Dorsolateral prefrontal cortex (tissue), 120 donors: ENCODE measurements at regions of chr7 and their contacts with region 1.

Region 1: DNA sequence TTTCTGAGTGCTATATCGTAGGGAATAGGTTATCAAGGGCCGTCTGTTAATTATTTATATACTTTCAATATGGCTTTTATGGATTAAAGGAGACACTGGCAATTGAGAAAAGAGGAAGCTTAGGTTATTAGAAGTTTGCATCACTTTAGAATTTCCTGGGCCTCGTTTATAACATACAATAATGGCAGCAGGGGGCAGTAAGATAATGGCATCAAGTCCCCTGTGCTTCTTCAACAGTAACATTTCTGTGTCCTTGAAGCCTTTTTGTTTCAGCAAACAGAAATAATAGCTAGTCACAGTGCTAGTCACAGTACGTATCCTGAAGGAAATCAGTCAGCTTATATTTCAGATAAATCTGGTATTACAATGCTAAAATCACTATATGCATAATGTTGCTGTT is 41.9 kb downstream of the SPAM1 start:
- DNase-seq: no peak
- H3K4me3 ChIP-seq: peak overlapping the region in 3 of 59 donors; percentile 12 to 45 (median 45)
- H3K27ac ChIP-seq: peak overlapping the region in 28 of 59 donors; percentile 3 to 70 (median 37)
- H3K27me3 ChIP-seq: no peaks in the 10 kb centered on the region
- CTCF ChIP-seq: peak in 54 of 56 donors; percentile 26 to 81 (median 58)

Region 2: DNA sequence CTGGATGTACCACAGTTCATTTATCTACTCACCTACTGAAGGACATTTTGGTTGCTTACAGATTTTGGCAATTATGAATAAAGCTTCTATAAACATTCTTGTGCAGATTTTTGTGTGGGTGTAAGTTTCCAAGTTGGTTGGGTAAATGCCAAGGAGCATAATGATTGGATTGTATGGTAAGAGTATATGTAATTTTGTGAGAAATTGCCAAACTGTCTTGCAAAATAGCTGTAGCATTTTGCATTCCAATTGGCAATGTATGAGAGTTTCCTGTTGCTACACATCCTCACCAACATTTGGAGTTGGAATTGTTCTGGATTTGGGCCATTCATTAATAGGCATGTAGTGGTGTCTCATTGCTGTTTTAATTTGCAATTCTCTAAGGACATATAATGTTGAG is 155.9 kb before region 1 on chr7:
- intact Hi-C with region 1: no loop called
- DNase-seq: no peak
- H3K4me3 ChIP-seq: no peak overlapping the region
- H3K27ac ChIP-seq: no peak overlapping the region
- H3K27me3 ChIP-seq: no peaks in the 10 kb centered on the region
- CTCF ChIP-seq: no peak

Region 3: GRCh38 chr7:124032369-124033094 is 65.6 kb after region 1 on chr7 and contains the start of gene TMEM229A:
- intact Hi-C with region 1: loop called (anchors 2 to 5 kb)
- DNase-seq: peak; percentile 37 to 75 (median 60)
- H3K4me3 ChIP-seq: peak within 1 kb of the TSS; percentile 61 to 93 (median 84)
- H3K27ac ChIP-seq: peak within 1 kb of the TSS; percentile 92 to 100 (median 98)
- H3K27me3 ChIP-seq: no peaks in the 10 kb centered on the region
- CTCF ChIP-seq: peak in 28 of 56 donors; percentile 3 to 52 (median 23)
- total RNA-seq, gene TMEM229A: 4.5 to 16.4 (median 9.0) TPM

Region 4: DNA sequence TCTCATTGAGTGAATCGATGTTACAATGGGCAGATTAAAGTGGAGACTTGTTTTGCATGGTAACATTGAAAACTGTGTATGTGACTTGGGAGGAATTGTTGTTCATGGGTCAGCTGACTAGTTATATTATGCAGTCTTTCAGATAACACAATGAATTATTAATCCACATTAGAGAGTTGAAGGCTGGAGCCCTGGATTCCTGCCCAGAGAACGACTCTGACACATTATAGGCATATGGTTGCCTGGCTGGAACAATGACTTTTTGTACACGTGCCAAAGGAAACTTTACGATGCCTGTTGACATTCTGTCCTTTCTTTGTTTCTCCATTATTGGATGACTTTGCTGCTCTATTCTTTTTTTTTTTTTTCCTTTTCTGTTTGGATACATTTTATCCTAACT is 118.2 kb after region 1 on chr7:
- intact Hi-C with region 1: loop called in 1 of 2 experiments (anchors 5 kb)
- DNase-seq: peak; percentile 35 to 95 (median 71)
- H3K4me3 ChIP-seq: peak overlapping the region in 23 of 59 donors; percentile 0 to 39 (median 15)
- H3K27ac ChIP-seq: peak overlapping the region in 57 of 59 donors; percentile 3 to 92 (median 78)
- H3K27me3 ChIP-seq: no peaks in the 10 kb centered on the region
- CTCF ChIP-seq: peak in 3 of 56 donors; percentile 6 to 20 (median 9)

Region 5: DNA sequence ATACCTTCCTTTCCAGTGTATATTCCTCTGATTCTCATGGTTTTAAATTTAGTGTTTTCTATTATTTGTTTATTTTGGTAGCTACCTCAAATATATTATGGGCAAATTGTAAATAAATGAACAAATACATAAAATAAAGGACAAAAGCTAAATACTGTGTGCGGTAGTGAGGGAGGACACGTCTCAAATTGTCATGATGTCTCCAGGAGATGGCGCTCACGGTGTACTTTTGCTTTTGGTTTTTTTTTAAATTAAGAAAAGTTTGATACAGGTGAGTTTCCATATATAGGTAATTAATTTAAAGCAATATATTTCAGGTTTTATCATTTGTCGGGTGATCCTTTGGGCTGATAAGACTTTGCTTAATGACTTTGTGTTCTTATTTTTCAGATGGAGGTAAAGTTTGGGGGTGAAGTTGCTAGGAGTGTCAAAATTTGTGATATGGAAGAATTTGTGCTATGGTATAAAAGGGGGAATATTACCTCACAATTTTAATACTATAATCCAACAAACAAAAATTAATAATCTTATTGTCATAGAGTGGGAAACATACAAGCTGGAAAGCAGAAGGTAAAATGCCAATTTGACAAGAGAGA is 134.3 kb after region 1 on chr7:
- intact Hi-C with region 1: loop called (anchors 5 to 10 kb)
- DNase-seq: no peak
- H3K4me3 ChIP-seq: no peak overlapping the region
- H3K27ac ChIP-seq: no peak overlapping the region
- H3K27me3 ChIP-seq: no peaks in the 10 kb centered on the region
- CTCF ChIP-seq: peak in 55 of 56 donors; percentile 10 to 76 (median 62)

Region 6: GRCh38 chr7:124152859-124153692 is 186.1 kb after region 1 on chr7:
- intact Hi-C with region 1: loop called (anchors 2 to 5 kb)
- DNase-seq: peak in 2 of 10 donors; percentile 4 to 14
- H3K4me3 ChIP-seq: no peak overlapping the region
- H3K27ac ChIP-seq: peak overlapping the region in 2 of 59 donors; percentile 5 to 28
- H3K27me3 ChIP-seq: no peaks in the 10 kb centered on the region
- CTCF ChIP-seq: peak in 55 of 56 donors; percentile 24 to 72 (median 53)

Region 7: DNA sequence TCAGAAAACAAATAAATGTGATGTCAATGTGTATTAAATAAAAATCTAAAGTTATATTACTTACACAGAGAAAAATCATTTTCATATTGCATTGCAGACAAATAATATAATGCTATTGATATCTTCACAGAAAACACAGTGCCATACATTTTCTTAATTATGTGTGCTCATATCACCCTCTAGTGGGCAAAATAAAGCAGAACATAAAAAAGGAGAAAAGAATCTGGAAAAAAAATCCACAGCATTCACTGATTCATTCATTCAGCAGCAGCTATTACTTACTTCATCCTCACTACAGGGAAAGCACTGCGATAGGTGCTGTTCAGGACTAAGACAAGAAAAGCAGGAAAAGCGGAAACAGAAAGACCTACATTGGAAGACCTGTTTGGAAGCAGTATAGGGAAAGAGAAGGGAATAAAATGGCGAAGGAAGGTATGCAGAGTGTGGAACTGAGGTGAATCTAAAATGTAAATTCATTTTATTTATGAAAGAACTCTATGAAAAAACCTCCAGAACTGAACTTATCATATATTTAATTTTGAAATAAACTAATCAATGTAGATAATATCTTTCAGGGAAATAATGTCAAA is 889.5 kb after region 1 on chr7:
- intact Hi-C with region 1: loop called in 1 of 2 experiments (anchors 10 kb)
- DNase-seq: no peak
- H3K4me3 ChIP-seq: no peak overlapping the region
- H3K27ac ChIP-seq: no peak overlapping the region
- H3K27me3 ChIP-seq: no peaks in the 10 kb centered on the region
- CTCF ChIP-seq: peak; percentile 59 to 88 (median 75)